ENCODE measurements at regions of chr16 and their contacts with region 1.

Region 1: DNA sequence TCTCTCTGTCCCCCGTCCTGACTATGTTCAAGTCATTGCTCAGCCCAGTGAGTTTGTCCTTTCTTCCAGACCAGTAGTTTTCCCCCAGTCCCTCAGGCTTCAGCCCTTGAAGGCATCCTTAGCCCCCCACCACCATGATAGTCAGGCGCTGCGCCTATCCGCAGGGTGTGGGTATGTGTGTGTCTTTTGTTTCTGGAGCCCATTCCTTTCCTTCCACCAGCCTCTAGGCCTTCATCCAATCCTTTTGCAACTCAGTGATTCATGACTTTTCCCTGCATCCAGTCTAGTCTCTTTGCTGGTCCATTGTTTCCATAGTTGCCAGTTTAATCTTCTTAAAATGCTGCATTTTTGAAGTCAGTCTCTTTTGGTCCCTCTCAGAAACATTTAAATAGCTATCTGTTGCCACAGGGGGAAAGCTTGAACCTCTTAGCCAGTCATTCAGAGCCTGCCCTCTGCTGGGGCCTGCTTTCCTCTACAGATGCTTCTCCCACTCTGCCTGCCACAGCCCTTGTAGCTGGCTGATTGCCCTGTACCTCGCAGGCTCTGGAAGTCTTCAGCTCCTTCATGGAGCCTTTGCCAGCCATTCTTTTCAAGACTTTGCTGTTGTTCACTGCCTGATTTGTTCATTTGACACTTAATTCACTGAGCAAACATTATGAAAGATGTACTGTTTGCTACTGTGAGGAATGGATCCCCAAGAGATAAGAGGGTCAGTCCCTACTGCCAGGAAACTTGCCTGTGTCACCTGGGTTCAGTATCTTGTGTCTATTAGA is 55.9 kb upstream of the ADCY7 start:
- DNase-seq: peak; percentile 80
- ATAC-seq: peak; percentile 90
- H3K4me3 Mint-ChIP-seq: no peak overlapping the region
- H3K27ac Mint-ChIP-seq: peak overlapping the region; percentile 31
- H3K4me1 Mint-ChIP-seq: peaks cover 34% of the 10 kb centered on the region
- H3K27me3 Mint-ChIP-seq: no peaks in the 10 kb centered on the region

Region 2: DNA sequence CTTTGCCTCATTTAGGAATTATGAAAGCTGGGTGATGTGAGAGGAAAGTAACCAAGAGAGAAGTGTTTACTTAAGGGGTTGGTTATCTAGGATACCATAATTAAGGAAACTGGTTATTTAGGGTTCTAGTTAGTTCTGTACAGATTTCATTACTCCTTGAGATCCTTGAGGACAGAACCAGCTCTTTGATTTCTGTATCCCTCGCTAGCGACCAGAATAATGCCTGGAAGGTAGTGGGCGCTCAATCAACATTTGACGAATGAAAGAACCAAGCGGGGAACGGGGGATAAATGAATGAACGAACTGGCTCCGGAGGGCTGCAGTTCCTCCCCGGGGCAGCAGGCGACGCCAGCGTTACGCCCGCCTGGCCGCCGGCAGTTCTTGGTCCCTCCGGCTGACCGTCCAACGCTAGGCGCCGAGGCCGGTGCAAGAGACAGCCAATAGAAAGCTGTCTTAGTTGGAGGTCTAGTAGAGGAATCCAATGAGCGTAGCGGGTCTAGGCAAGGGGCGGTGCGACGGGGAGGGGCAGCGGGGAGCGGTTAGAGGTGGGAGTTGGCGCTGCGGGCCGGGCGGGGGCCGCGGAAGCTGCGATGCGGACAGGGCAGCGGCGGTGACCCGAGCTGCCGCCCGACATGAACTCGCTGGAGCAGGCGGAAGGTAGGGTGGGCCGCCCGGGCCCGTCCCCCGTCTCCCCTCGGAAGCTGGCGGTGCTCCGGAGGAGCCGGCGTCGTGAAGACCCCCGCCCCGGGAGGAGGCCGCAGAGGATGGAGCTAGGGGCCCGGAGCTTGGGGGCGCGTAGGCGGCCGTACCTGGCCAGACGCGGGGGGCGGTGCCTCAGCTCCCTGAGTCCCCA is 185.5 kb before region 1 on chr16 and contains the start of gene CNEP1R1:
- CTCF ChIA-PET with region 1: interaction called, 167 read pairs
- DNase-seq: peak; percentile 97
- ATAC-seq: peak; percentile 99
- H3K4me3 Mint-ChIP-seq: peak within 1 kb of the TSS; percentile 96
- H3K27ac Mint-ChIP-seq: peak within 1 kb of the TSS; percentile 90
- H3K4me1 Mint-ChIP-seq: peaks cover 20% of the 10 kb centered on the region
- H3K27me3 Mint-ChIP-seq: peaks cover 2% of the 10 kb centered on the region
- total RNA-seq, gene CNEP1R1: 27.7 to 28.4 TPM

Region 3: DNA sequence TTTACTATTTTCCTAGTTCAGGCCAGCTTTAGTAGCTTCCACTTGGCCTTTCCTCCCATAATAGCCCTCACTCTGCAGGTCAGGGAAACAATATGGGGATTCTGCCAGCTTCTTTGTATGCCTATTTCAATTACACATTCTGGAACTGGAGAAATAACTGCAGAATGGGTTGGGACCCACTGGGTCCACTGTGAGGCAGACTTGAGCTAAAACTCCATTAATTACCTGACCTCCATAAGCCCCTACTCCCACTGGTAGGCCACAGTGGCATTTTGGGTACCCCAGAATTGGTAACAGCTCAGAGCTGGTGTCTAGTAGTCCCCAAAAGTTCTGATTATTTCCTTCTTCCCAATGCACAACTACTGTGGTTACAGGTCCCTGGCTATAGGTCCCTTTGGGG is 74.1 kb before region 1 on chr16:
- CTCF ChIA-PET with region 1: interaction called, 11 read pairs
- DNase-seq: no peak
- ATAC-seq: no peak
- H3K4me3 Mint-ChIP-seq: no peak overlapping the region
- H3K27ac Mint-ChIP-seq: no peak overlapping the region
- H3K4me1 Mint-ChIP-seq: peaks cover 1% of the 10 kb centered on the region
- H3K27me3 Mint-ChIP-seq: no peaks in the 10 kb centered on the region

Region 4: DNA sequence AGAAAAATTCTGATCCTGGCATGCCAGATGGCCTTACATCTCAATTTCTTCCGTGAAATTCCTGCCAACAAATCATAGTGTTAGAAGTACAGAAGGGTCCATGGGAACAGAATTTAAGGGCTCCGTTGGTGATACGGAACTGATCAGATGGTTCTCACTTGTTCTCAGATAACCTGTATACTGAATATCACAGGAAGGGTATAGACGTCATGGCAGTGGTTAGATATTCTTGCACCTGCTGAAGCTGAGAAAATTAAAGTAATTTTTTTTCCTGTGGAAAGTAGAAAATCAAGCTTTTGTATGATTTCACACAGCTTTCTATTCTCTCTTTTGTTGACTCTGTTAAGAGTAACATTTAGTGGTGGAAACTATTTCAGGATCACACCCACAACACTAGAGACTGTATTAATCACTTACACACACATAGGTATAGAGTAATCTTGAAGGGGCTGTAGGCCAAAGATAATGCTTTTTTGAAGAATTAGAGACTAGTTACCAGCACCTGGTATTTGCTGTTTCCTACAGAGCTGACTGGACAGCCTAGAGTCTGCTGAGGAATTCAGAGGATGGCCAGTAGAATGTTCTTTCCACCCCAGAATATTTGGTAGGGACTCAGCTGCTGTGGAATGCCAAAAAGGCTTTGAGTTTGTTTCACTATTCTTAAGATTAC is 49.8 kb before region 1 on chr16:
- CTCF ChIA-PET with region 1: interaction called, 14 read pairs
- DNase-seq: no peak
- ATAC-seq: peak; percentile 63
- H3K4me3 Mint-ChIP-seq: no peak overlapping the region
- H3K27ac Mint-ChIP-seq: peak overlapping the region; percentile 68
- H3K4me1 Mint-ChIP-seq: peaks cover 52% of the 10 kb centered on the region
- H3K27me3 Mint-ChIP-seq: no peaks in the 10 kb centered on the region

Region 5: GRCh38 chr16:50188619-50189131 is 21.8 kb before region 1 on chr16:
- CTCF ChIA-PET with region 1: interaction called, 10 read pairs
- DNase-seq: no peak
- ATAC-seq: no peak
- H3K4me3 Mint-ChIP-seq: no peak overlapping the region
- H3K27ac Mint-ChIP-seq: no peak overlapping the region
- H3K4me1 Mint-ChIP-seq: peaks cover 16% of the 10 kb centered on the region
- H3K27me3 Mint-ChIP-seq: no peaks in the 10 kb centered on the region

Region 6: GRCh38 chr16:50254072-50254471 is 43.6 kb after region 1 on chr16:
- CTCF ChIA-PET with region 1: no interaction called
- DNase-seq: no peak
- ATAC-seq: no peak
- H3K4me3 Mint-ChIP-seq: no peak overlapping the region
- H3K27ac Mint-ChIP-seq: no peak overlapping the region
- H3K4me1 Mint-ChIP-seq: peaks cover 5% of the 10 kb centered on the region
- H3K27me3 Mint-ChIP-seq: peaks cover 5% of the 10 kb centered on the region

Region 7: GRCh38 chr16:50273681-50274325 is 63.4 kb after region 1 on chr16:
- CTCF ChIA-PET with region 1: interaction called, 20 read pairs
- DNase-seq: peak; percentile 74
- ATAC-seq: peak; percentile 48
- H3K4me3 Mint-ChIP-seq: peak overlapping the region; percentile 82
- H3K27ac Mint-ChIP-seq: peak overlapping the region; percentile 98
- H3K4me1 Mint-ChIP-seq: peaks cover 94% of the 10 kb centered on the region
- H3K27me3 Mint-ChIP-seq: no peaks in the 10 kb centered on the region

Region 8: DNA sequence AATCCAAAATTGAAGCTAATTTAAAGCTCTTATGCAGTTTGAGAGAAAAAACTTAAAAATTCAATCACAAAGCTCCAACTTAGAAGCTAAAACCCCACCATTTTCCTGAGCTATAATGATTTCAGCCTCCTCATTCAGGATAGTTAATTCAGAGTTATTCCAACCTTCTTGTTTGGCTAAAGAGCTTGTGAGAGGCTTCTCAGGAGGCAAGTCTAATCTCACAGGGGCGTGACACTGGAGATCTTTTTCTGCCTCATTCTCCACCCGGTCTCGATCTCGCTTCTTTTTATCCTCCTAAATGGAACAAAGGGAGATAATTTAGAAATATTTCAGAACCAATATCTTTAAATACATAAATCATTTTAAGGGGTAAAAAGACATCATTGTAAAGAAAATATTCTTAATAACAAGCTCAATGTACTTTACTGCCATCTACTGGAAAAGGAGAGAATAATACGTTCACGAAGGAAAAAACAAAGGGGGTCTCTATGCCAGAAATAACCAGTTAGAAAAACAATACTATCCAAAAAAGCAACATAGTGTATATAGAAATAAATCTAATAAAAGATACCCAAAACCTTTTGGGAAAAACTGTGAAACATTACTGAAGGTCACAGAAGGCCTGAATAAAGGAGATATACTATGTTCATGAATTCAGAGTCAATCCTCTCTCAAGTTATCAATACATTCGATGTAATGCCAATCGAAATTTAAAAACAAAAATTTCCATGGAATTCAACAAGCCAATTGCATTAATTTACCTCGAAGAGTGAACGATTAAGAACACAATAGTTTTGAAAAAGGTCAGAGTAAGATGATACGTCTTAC is 144.4 kb after region 1 on chr16:
- CTCF ChIA-PET with region 1: interaction called, 111 read pairs
- DNase-seq: no peak
- ATAC-seq: no peak
- H3K4me3 Mint-ChIP-seq: no peak overlapping the region
- H3K27ac Mint-ChIP-seq: no peak overlapping the region
- H3K4me1 Mint-ChIP-seq: peaks cover 11% of the 10 kb centered on the region
- H3K27me3 Mint-ChIP-seq: no peaks in the 10 kb centered on the region